ENCODE measurements at regions of chr3 and their contacts with region 1.

Region 1: DNA sequence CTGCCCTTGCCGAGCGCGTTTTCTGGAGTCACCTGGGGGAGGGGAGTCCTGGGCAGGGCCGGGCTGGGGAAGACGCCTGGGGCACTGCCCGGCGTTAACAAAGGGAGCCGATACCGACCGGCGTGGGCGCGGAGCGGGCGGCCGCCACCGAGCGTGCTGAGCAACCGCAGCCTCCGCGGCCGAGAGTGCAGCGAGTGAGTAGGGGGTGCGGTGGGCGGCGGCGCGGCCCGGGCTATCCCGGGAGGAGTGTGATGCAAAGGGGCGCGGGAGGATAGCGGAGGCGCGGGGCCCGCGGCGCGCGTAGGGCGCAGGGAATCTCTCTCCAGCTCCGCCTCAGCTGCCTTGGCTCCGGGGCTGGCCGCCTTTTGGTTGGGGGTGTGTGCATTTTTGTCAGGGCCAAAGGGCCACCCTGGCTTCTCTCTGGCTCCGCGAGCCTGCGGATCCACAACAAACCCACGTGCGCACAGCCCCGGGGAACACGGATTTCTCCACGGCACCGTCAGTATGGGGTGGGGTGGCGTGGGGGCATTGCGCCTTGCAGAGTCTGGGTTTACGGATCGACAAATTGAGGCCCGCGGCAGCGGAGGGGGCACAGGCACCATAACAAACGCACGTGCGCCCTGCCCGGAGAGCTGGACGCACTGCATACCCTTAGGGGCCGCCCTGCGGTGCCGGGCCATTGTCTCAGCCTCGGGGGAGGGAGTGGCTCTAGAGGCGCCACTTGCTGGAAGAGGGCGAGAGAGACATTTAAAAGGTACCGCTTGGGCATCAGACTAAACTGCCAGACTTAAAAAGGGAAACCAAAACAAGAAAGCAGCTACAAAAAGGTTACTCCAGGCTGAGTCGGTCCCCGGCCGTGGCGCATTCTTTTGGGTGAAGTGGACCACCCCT is 560 bp downstream of the ST6GAL1 start:
- DNase-seq: peak; percentile 81
- ATAC-seq: peak; percentile 72
- H3K4me3 Mint-ChIP-seq: peak overlapping the region; percentile 88
- H3K27ac Mint-ChIP-seq: peak overlapping the region; percentile 87
- H3K4me1 Mint-ChIP-seq: peaks cover 36% of the 10 kb centered on the region
- H3K27me3 Mint-ChIP-seq: no peaks in the 10 kb centered on the region

Region 2: GRCh38 chr3:186882881-186883685 is 47.8 kb before region 1 on chr3:
- CTCF ChIA-PET with region 1: interaction called, 18 read pairs
- DNase-seq: peak; percentile 60
- ATAC-seq: peak; percentile 84
- H3K4me3 Mint-ChIP-seq: no peak overlapping the region
- H3K27ac Mint-ChIP-seq: peak overlapping the region; percentile 75
- H3K4me1 Mint-ChIP-seq: peaks cover 50% of the 10 kb centered on the region
- H3K27me3 Mint-ChIP-seq: peaks cover 4% of the 10 kb centered on the region

Region 3: DNA sequence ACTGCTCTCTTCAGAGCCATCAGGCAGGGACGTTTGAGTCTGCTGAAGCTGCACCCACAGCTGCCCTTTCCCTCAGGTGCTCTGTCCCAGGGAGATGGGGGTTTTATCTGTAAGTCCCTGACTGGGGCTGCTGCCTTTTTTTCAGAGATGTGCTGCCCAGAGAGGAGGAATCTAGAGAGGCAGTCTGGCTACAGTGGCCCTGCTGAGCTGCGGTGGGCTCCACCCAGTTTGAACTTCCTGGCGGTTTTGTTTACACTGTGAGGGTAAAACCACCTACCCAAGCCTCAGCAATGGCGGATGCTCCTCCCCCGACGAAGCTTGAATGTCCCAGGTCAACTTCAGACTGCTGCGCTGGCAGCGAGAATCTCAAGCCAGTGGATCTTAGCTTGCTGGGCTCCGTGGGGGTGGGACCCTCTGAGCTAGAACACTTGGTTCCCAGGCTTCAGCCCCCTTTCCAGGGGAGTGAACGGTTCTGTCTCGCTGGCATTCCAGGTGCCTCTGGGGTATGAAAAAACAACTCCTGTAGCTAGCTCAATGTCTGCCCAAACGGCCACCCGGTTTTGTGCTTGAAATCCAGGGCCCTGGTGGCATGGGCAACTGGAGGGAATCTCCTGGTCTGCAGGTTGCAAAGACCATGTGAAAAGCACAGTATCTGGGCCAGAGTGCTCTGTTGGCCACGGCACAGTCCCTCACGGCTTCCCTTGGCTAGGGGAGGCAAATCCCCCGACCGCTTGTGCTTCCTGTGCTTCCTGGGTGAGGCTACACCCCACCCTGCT is 21.6 kb before region 1 on chr3:
- CTCF ChIA-PET with region 1: interaction called, 13 read pairs
- DNase-seq: peak; percentile 95
- ATAC-seq: peak; percentile 92
- H3K4me3 Mint-ChIP-seq: peak overlapping the region; percentile 59
- H3K27ac Mint-ChIP-seq: peak overlapping the region; percentile 97
- H3K4me1 Mint-ChIP-seq: peaks cover 43% of the 10 kb centered on the region
- H3K27me3 Mint-ChIP-seq: no peaks in the 10 kb centered on the region

Region 4: GRCh38 chr3:187558990-187559389 is 628.1 kb after region 1 on chr3:
- CTCF ChIA-PET with region 1: no interaction called
- DNase-seq: no peak
- ATAC-seq: no peak
- H3K4me3 Mint-ChIP-seq: no peak overlapping the region
- H3K27ac Mint-ChIP-seq: no peak overlapping the region
- H3K4me1 Mint-ChIP-seq: no peaks in the 10 kb centered on the region
- H3K27me3 Mint-ChIP-seq: peaks cover 16% of the 10 kb centered on the region

Measured in activated CD8-positive, alpha-beta memory T cell treated with anti-CD3 and anti-CD28 coated beads, Interleukin-2, amount 10 ng/mL, durations not matched to agents 7 days and 5 days (primary cell).